B cell (primary cell): ENCODE measurements at regions of chr17 and their contacts with region 1.

Region 1: DNA sequence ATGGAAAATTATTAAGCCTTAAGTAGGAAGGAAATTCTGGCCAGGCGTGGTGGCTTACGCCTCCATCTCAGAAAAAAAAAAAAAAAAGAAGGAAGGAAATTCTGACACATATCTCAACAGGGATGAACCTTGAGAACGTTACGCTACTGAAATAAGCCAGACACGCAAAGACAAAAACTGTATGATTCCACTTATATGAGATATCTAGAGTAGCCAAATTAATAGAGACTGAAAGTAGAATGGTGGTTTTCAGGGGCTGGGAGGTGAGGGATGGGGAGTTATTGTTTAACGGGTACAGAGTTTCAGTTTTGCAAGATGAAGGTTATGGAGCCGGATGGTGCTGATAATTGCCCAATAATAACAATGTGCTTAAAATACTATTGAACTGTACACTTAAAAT is 16.2 kb upstream of the HNF1B start:
- DNase-seq: no peak
- ATAC-seq: no peak
- H3K4me3 ChIP-seq: no peak overlapping the region
- H3K4me3 Mint-ChIP-seq: peak overlapping the region; percentile 14
- H3K27ac ChIP-seq: no peak overlapping the region
- H3K27ac Mint-ChIP-seq: no peak overlapping the region
- H3K4me1 ChIP-seq: peaks cover 3 to 10% of the 10 kb centered on the region in 2 donors
- H3K4me1 Mint-ChIP-seq: peaks cover 12% of the 10 kb centered on the region
- H3K27me3 ChIP-seq: peaks cover 0 to 6% (median 1%) of the 10 kb centered on the region in 4 experiments
- H3K27me3 Mint-ChIP-seq: peaks cover 37% of the 10 kb centered on the region
- CTCF ChIP-seq: no peak

Region 2: DNA sequence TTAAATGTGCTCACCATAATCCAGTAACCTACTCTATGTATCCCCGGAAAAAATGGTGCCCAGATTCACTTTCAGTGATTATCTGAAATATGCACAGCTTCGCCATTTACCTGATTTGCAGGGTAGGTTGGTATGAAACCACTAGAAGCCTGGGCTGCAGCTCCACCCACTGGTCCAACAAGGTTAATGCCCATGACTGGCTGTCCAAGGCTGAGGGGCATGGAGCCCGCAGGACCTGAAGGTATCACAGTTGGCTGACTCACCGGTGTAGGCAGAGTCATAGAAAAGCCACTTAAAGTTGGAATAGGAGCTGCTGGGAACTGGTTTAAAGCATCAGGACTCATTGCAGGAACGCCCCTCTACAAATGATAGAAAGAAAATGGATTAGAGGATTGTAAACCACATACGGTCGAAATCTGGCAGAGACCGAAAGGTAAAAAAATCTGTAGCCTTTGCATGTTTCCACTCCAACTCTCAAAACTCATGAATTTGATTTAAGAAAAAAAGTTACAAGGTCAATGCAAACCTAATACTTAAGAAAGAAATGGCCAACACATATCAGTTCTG is 190.4 kb before region 1 on chr17:
- CTCF ChIA-PET with region 1: no interaction called
- POLR2A ChIA-PET with region 1: interaction called, 10 read pairs
- intact Hi-C with region 1: no loop called
- DNase-seq: peak; percentile 18
- ATAC-seq: peak; percentile 41
- H3K4me3 ChIP-seq: no peak overlapping the region
- H3K4me3 Mint-ChIP-seq: no peak overlapping the region
- H3K27ac ChIP-seq: no peak overlapping the region
- H3K27ac Mint-ChIP-seq: no peak overlapping the region
- H3K4me1 ChIP-seq: no peaks in the 10 kb centered on the region
- H3K4me1 Mint-ChIP-seq: peaks cover 4% of the 10 kb centered on the region
- H3K27me3 ChIP-seq: no peaks in the 10 kb centered on the region
- H3K27me3 Mint-ChIP-seq: no peaks in the 10 kb centered on the region
- CTCF ChIP-seq: peak; percentile 16

Region 3: GRCh38 chr17:37671824-37672547 is 89.1 kb before region 1 on chr17:
- CTCF ChIA-PET with region 1: no interaction called
- POLR2A ChIA-PET with region 1: no interaction called
- intact Hi-C with region 1: no loop called
- DNase-seq: no peak
- ATAC-seq: no peak
- H3K4me3 ChIP-seq: no peak overlapping the region
- H3K4me3 Mint-ChIP-seq: no peak overlapping the region
- H3K27ac ChIP-seq: no peak overlapping the region
- H3K27ac Mint-ChIP-seq: no peak overlapping the region
- H3K4me1 ChIP-seq: no peaks in the 10 kb centered on the region
- H3K4me1 Mint-ChIP-seq: no peaks in the 10 kb centered on the region
- H3K27me3 ChIP-seq: peaks cover 0 to 1% (median 0%) of the 10 kb centered on the region in 4 experiments
- H3K27me3 Mint-ChIP-seq: peaks cover 18% of the 10 kb centered on the region
- CTCF ChIP-seq: no peak

Region 4: GRCh38 chr17:37701496-37701898 is 59.6 kb before region 1 on chr17:
- CTCF ChIA-PET with region 1: no interaction called
- POLR2A ChIA-PET with region 1: no interaction called
- intact Hi-C with region 1: no loop called
- DNase-seq: peak; percentile 76
- ATAC-seq: peak; percentile 91
- H3K4me3 ChIP-seq: peak overlapping the region; percentile 14 to 45 (median 25)
- H3K4me3 Mint-ChIP-seq: peak overlapping the region; percentile 67
- H3K27ac ChIP-seq: no peak overlapping the region
- H3K27ac Mint-ChIP-seq: peak overlapping the region; percentile 28
- H3K4me1 ChIP-seq: peaks cover 0 to 6% of the 10 kb centered on the region in 2 donors
- H3K4me1 Mint-ChIP-seq: peaks cover 7% of the 10 kb centered on the region
- H3K27me3 ChIP-seq: peaks cover 0 to 6% (median 0%) of the 10 kb centered on the region in 4 experiments
- H3K27me3 Mint-ChIP-seq: peaks cover 29% of the 10 kb centered on the region
- CTCF ChIP-seq: peak; percentile 89

Region 5: DNA sequence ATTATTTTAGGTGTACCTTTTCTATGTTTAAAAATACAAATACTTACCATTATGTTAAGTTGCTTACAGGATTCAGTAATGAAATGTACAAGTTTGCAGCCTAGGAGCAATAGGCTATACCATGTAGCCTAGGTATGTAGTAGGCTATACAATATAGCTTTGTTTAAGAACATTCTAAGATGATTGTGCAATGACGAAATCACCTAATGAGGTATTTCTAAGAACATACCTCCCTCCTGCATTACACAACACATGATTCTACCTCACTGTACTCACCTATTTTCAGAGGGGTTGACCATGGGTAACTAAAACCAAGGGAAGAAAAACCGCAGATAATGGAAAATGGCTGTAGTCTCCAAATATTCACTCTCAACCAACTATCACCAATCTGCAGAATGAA is 127.8 kb after region 1 on chr17:
- CTCF ChIA-PET with region 1: no interaction called
- POLR2A ChIA-PET with region 1: no interaction called
- intact Hi-C with region 1: no loop called
- DNase-seq: no peak
- ATAC-seq: no peak
- H3K4me3 ChIP-seq: no peak overlapping the region
- H3K4me3 Mint-ChIP-seq: no peak overlapping the region
- H3K27ac ChIP-seq: no peak overlapping the region
- H3K27ac Mint-ChIP-seq: no peak overlapping the region
- H3K4me1 ChIP-seq: no peaks in the 10 kb centered on the region
- H3K4me1 Mint-ChIP-seq: peaks cover 5% of the 10 kb centered on the region
- H3K27me3 ChIP-seq: no peaks in the 10 kb centered on the region
- H3K27me3 Mint-ChIP-seq: peaks cover 20% of the 10 kb centered on the region
- CTCF ChIP-seq: no peak